ENCODE measurements at regions of chr16 and their contacts with region 1.

Region 1: DNA sequence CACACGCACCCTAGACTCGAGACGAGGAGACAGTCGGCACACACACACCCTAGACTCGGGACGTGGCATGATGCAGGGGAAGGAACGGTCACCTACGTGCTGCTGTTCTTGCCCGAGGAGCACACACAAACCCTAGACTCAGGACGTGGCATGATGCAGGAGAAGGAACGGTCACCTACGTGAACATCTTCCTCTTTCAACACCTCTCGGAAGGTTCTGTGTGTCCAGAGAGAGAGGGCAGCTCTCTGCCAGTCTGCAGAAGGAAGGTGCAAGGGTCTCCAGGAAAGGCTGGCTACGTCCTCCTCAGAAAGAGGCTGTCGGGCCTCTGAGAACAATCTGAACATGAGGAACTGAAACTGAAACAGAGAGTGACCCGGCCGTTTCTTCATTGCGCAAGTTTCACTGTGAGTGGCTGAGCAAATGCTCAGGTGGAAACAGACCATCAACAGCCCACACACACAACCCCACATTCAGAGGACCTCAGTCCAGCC is 43.4 kb downstream of the ZNF276 start:
- DNase-seq: peak in 24 of 35 experiments; percentile 8 to 62 (median 26)
- ATAC-seq: peak; percentile 44 to 69 (median 60)
- H3K4me3 ChIP-seq: peak overlapping the region in 1 of 2 donors; percentile 43
- H3K4me3 Mint-ChIP-seq: peak overlapping the region; percentile 76 to 82 (median 80)
- H3K27ac ChIP-seq: peak overlapping the region; percentile 69
- H3K27ac Mint-ChIP-seq: peak overlapping the region; percentile 92 to 93
- H3K4me1 ChIP-seq: peaks cover 9 to 47% of the 10 kb centered on the region in 2 experiments
- H3K4me1 Mint-ChIP-seq: peaks cover 31 to 47% (median 47%) of the 10 kb centered on the region in 3 donors
- H3K27me3 ChIP-seq: no peaks in the 10 kb centered on the region
- H3K27me3 Mint-ChIP-seq: no peaks in the 10 kb centered on the region

Region 2: DNA sequence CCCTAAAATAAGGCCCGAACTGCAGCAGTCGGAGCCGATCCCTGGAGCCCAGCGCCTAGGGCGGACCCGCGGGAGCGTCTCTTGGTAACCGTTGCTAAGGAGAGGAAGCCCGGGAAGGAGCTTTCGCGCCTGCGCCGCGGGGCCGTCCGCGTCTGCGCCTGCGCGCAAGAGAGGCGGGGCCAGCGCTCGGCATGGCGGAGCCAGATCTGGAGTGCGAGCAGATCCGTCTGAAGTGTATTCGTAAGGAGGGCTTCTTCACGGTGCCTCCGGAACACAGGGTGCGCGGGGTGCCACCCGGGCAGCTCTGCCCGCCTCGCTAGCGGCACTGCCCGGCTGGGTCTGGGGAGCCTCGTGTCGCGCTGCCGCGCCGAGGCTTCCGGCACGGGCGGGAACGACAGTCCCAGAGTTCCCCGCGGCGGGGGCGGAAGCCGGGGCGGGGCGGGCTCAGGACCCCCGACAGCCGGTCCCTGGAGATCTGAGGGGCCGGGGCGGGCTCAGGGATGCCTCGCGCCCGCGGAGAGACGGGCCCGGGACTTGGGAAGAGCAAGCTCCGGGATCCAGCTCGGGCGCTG is 78.2 kb before region 1 on chr16 and contains the start of gene CDK10:
- CTCF ChIA-PET with region 1: no interaction called
- POLR2A ChIA-PET with region 1: interaction called in 1 of 2 experiments, 10 read pairs
- DNase-seq: peak; percentile 63 to 91 (median 79)
- ATAC-seq: peak; percentile 91 to 95 (median 94)
- H3K4me3 ChIP-seq: peak within 1 kb of the TSS; percentile 67 to 90
- H3K4me3 Mint-ChIP-seq: peak within 1 kb of the TSS; percentile 86 to 94 (median 91)
- H3K27ac ChIP-seq: peak within 1 kb of the TSS; percentile 63
- H3K27ac Mint-ChIP-seq: peak within 1 kb of the TSS; percentile 91
- H3K4me1 ChIP-seq: peaks cover 7 to 20% of the 10 kb centered on the region in 2 experiments
- H3K4me1 Mint-ChIP-seq: peaks cover 15 to 19% (median 17%) of the 10 kb centered on the region in 3 donors
- H3K27me3 ChIP-seq: no peaks in the 10 kb centered on the region
- H3K27me3 Mint-ChIP-seq: no peaks in the 10 kb centered on the region
- total RNA-seq, gene CDK10: 108 to 163 (median 138) TPM

Region 3: DNA sequence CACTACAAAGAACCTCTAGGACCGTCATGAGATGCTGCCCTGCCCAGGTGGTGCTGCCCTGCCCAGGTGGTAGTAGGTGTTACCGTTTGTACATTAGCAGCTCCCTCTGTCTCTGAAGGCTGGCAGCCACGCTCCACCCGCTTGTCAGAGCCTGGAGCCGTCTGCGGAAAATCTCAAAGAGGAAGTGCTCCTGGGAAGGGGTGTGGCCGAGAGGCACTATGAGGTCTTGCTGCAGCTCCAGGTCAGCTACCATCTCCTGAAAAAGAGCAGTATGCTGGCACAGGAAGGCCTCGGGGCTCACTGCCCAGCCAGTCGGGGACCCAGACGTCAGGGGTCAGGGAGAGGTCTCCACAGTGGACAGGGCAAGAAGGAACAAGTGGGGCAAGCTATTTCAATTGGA is 15.1 kb before region 1 on chr16:
- CTCF ChIA-PET with region 1: no interaction called
- POLR2A ChIA-PET with region 1: interaction called, 3 to 11 read pairs
- DNase-seq: peak in 2 of 35 experiments; percentile 15 to 30
- ATAC-seq: peak in 1 of 4 experiments; percentile 9
- H3K4me3 ChIP-seq: no peak overlapping the region
- H3K4me3 Mint-ChIP-seq: no peak overlapping the region
- H3K27ac ChIP-seq: no peak overlapping the region
- H3K27ac Mint-ChIP-seq: peak overlapping the region in 1 of 2 donors; percentile 55
- H3K4me1 ChIP-seq: peaks cover 0 to 29% of the 10 kb centered on the region in 2 experiments
- H3K4me1 Mint-ChIP-seq: peaks cover 11 to 26% (median 26%) of the 10 kb centered on the region in 3 donors
- H3K27me3 ChIP-seq: no peaks in the 10 kb centered on the region
- H3K27me3 Mint-ChIP-seq: no peaks in the 10 kb centered on the region

Region 4: GRCh38 chr16:89779231-89779908 is 14.6 kb after region 1 on chr16:
- CTCF ChIA-PET with region 1: no interaction called
- POLR2A ChIA-PET with region 1: interaction called in 1 of 2 experiments, 17 read pairs
- DNase-seq: no peak
- ATAC-seq: no peak
- H3K4me3 ChIP-seq: no peak overlapping the region
- H3K4me3 Mint-ChIP-seq: no peak overlapping the region
- H3K27ac ChIP-seq: no peak overlapping the region
- H3K27ac Mint-ChIP-seq: no peak overlapping the region
- H3K4me1 ChIP-seq: peaks cover 0 to 8% of the 10 kb centered on the region in 2 experiments
- H3K4me1 Mint-ChIP-seq: peaks cover 8 to 11% (median 9%) of the 10 kb centered on the region in 3 donors
- H3K27me3 ChIP-seq: no peaks in the 10 kb centered on the region
- H3K27me3 Mint-ChIP-seq: no peaks in the 10 kb centered on the region

Measured in T-cell (primary cell).